Activated naive CD4-positive, alpha-beta T cell treated with anti-CD3 and anti-CD28 coated beads for 36 hours (primary cell): ENCODE measurements at regions of chr12 and their contacts with region 1.

Region 1: DNA sequence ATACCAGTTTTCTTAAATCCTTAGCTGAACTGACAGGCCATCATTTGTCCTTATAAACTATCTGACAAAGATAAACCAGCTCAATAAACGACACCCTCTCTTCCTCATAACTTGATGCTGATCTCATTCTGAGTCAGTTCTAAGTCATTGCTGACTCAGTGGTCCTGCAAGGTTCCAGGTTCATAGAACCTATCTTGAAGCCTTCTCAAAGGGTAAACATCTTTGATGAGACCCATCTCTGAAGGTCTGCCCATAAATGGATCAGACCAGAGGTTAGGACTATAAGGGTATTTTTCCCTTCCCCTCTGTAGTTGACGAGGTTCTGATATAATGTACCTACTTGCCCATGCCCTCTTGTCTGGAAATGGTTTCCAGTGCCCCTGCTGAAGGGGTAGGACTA is 11.9 kb downstream of the NAA25 start:
- DNase-seq: peak; percentile 59
- H3K4me3 Mint-ChIP-seq: peak overlapping the region; percentile 1
- H3K27ac Mint-ChIP-seq: peak overlapping the region; percentile 92
- H3K4me1 Mint-ChIP-seq: peaks cover 50% of the 10 kb centered on the region
- H3K27me3 Mint-ChIP-seq: no peaks in the 10 kb centered on the region

Region 2: DNA sequence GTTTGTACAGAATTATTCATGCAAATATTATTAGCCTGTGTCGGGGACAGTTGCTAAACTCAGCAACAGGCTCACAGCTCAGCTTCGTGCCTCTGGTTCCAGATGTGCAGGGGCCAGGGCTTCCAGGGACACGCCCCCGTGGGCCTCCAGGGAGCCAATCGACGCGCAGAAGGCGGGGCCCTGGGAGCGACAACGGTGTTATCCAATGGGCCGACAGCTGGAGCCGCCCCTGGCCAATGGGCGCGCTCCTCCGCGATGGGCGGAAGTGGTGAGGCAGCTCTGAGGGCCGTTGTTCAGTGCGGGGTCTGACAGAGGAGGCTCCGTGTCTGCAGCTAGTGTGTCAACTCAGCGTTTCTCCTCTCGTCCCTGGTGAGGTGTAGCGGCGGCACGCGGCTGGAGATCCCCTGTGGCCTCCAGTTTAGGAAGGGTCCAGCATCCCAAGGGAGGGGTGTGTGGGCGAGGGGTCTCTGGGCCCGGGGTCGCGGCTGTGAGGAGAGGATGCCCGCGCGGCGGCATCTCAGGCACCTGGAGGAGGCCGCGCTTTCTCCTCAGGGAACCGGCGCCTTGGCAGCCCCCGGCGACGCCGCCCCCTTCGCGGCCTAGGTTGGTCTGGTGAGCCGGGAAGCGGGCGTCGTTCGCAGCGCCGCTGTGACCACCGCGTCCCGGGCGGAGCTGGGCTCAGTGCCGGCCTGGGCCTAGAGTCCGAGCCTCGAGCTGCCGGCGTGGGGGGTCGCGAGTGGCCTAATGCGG is 28.8 kb after region 1 on chr12 and contains the start of gene TRAFD1:
- CTCF ChIA-PET with region 1: interaction called, 5 read pairs
- intact Hi-C with region 1: loop called (anchors 1 kb)
- DNase-seq: peak; percentile 98
- H3K4me3 Mint-ChIP-seq: peak within 1 kb of the TSS; percentile 72
- H3K27ac Mint-ChIP-seq: peak within 1 kb of the TSS; percentile 75
- H3K4me1 Mint-ChIP-seq: peaks cover 42% of the 10 kb centered on the region
- H3K27me3 Mint-ChIP-seq: no peaks in the 10 kb centered on the region
- total RNA-seq, gene TRAFD1: 49.6 to 55.7 TPM

Region 3: GRCh38 chr12:112496496-112496895 is 399.8 kb after region 1 on chr12:
- CTCF ChIA-PET with region 1: no interaction called
- intact Hi-C with region 1: no loop called
- DNase-seq: peak; percentile 60
- H3K4me3 Mint-ChIP-seq: no peak overlapping the region
- H3K27ac Mint-ChIP-seq: peak overlapping the region; percentile 22
- H3K4me1 Mint-ChIP-seq: peaks cover 23% of the 10 kb centered on the region
- H3K27me3 Mint-ChIP-seq: no peaks in the 10 kb centered on the region